Calu3 (cell line): ENCODE measurements at regions of chr2 and their contacts with region 1.

Region 1: GRCh38 chr2:226791487-226792081 is 8.0 kb downstream of the IRS1 start:
- DNase-seq: peak; percentile 97
- H3K4me3 Mint-ChIP-seq: peak overlapping the region; percentile 87
- H3K27ac Mint-ChIP-seq: peak overlapping the region; percentile 92
- H3K4me1 Mint-ChIP-seq: peaks cover 58% of the 10 kb centered on the region
- H3K27me3 Mint-ChIP-seq: no peaks in the 10 kb centered on the region
- CTCF ChIP-seq: peak; percentile 67

Region 2: GRCh38 chr2:226247289-226248275 is 544.0 kb before region 1 on chr2:
- CTCF ChIA-PET with region 1: no interaction called
- intact Hi-C with region 1: loop called (anchors 2 kb)
- DNase-seq: no peak
- H3K4me3 Mint-ChIP-seq: no peak overlapping the region
- H3K27ac Mint-ChIP-seq: peak overlapping the region; percentile 77
- H3K4me1 Mint-ChIP-seq: peaks cover 15% of the 10 kb centered on the region
- H3K27me3 Mint-ChIP-seq: no peaks in the 10 kb centered on the region
- CTCF ChIP-seq: no peak

Region 3: DNA sequence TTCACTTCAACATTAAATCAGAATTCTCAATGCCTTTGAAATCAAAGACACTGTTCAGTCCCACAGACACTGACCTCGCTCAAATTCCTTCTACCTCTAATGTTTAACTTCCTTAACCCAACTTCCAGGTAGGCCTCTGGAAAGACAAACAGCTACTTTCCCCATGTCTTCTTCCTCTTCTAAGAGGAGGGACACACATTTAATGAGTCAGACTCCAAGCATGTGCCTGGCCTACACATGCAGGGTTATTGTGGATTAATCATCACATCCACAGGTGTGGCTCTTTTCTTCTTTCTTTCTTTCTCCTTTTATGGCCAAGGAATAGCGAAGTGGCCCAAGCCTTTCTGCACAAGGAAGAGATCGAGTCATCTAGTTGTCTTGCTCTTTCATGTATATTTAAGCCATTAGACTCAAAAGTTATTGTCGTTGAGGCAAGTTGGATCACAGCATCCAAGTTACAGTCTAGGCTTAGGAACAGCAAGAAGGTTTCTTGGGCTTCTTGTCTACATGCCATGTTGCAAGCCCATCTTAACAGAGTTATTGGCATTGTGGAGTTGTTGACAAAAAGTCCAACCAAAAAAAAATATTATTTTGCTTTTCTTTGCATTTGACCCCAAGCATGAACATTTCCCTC is 379.7 kb before region 1 on chr2:
- CTCF ChIA-PET with region 1: no interaction called
- intact Hi-C with region 1: loop called (anchors 5 kb)
- DNase-seq: peak; percentile 73
- H3K4me3 Mint-ChIP-seq: peak overlapping the region; percentile 17
- H3K27ac Mint-ChIP-seq: peak overlapping the region; percentile 95
- H3K4me1 Mint-ChIP-seq: peaks cover 37% of the 10 kb centered on the region
- H3K27me3 Mint-ChIP-seq: no peaks in the 10 kb centered on the region
- CTCF ChIP-seq: no peak

Region 4: GRCh38 chr2:226733189-226733858 is 58.3 kb before region 1 on chr2:
- CTCF ChIA-PET with region 1: no interaction called
- intact Hi-C with region 1: loop called (anchors 5 kb)
- DNase-seq: no peak
- H3K4me3 Mint-ChIP-seq: no peak overlapping the region
- H3K27ac Mint-ChIP-seq: no peak overlapping the region
- H3K4me1 Mint-ChIP-seq: peaks cover 24% of the 10 kb centered on the region
- H3K27me3 Mint-ChIP-seq: no peaks in the 10 kb centered on the region
- CTCF ChIP-seq: no peak

Region 5: GRCh38 chr2:226758921-226759640 is 32.5 kb before region 1 on chr2:
- CTCF ChIA-PET with region 1: no interaction called
- intact Hi-C with region 1: loop called (anchors 5 kb)
- DNase-seq: no peak
- H3K4me3 Mint-ChIP-seq: no peak overlapping the region
- H3K27ac Mint-ChIP-seq: no peak overlapping the region
- H3K4me1 Mint-ChIP-seq: peaks cover 35% of the 10 kb centered on the region
- H3K27me3 Mint-ChIP-seq: no peaks in the 10 kb centered on the region
- CTCF ChIP-seq: no peak